ENCODE measurements at regions of chr5 and their contacts with region 1.

Region 1: GRCh38 chr5:88680253-88681132 is 202.5 kb downstream of the MEF2C start:
- DNase-seq: peak; percentile 77
- H3K4me3 Mint-ChIP-seq: peak overlapping the region; percentile 43
- H3K27ac Mint-ChIP-seq: no peak overlapping the region
- H3K4me1 Mint-ChIP-seq: peaks cover 15% of the 10 kb centered on the region
- H3K27me3 Mint-ChIP-seq: peaks cover 73% of the 10 kb centered on the region

Region 2: GRCh38 chr5:87780831-87781760 is 899.4 kb before region 1 on chr5:
- CTCF ChIA-PET with region 1: interaction called, 31 read pairs
- intact Hi-C with region 1: loop called (anchors 1 kb)
- DNase-seq: peak; percentile 88
- H3K4me3 Mint-ChIP-seq: no peak overlapping the region
- H3K27ac Mint-ChIP-seq: no peak overlapping the region
- H3K4me1 Mint-ChIP-seq: peaks cover 3% of the 10 kb centered on the region
- H3K27me3 Mint-ChIP-seq: peaks cover 24% of the 10 kb centered on the region

Region 3: GRCh38 chr5:88268385-88269184 is 411.9 kb before region 1 on chr5 and contains the start of gene TMEM161B:
- CTCF ChIA-PET with region 1: no interaction called
- intact Hi-C with region 1: loop called (anchors 2 kb)
- DNase-seq: peak; percentile 94
- H3K4me3 Mint-ChIP-seq: peak within 1 kb of the TSS; percentile 93
- H3K27ac Mint-ChIP-seq: peak within 1 kb of the TSS; percentile 96
- H3K4me1 Mint-ChIP-seq: peaks cover 42% of the 10 kb centered on the region
- H3K27me3 Mint-ChIP-seq: no peaks in the 10 kb centered on the region
- total RNA-seq, gene TMEM161B: 18.0 to 18.1 TPM

Region 4: DNA sequence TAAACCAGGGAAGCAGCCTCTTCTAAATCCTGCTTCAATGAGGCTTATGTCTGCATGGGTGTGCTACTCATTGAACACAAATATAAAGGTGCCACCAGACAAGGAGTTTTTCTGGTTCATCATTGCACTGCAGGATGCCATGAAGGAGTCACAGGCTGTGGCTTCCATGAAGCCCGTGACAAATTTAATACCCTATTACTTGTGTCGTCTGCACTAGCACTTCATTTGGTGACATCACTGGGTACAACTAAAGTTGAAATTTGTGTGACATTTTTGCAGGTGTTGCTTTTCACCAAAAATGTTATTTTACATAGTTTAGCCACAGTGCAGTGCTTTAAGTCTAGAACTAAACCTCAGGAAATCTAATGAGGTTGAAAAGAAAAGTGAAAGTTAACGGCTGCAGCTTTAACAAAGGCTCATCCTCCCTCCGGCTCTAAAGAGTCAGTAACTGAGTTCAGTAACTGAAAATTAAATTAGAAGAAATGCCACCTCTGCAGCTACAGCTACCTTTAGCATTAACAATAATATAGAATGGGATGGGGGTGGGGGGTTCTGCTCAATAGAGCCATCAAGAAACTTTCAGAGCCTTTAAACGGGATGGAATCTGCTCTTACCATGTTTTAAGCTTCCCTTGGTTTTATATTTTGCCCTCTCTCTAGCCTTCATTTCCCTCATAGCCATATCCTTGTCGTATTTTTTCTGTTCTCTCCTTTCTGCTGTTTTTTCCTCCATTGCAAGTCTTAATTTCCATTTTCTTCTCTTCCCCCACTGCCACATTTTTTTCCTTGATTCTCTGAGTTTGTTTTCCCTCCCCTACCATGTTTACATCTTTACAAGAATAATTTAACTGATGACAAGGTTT is 178.1 kb before region 1 on chr5:
- CTCF ChIA-PET with region 1: no interaction called
- intact Hi-C with region 1: loop called (anchors 2 kb)
- DNase-seq: peak; percentile 20
- H3K4me3 Mint-ChIP-seq: peak overlapping the region; percentile 78
- H3K27ac Mint-ChIP-seq: peak overlapping the region; percentile 77
- H3K4me1 Mint-ChIP-seq: peaks cover 3% of the 10 kb centered on the region
- H3K27me3 Mint-ChIP-seq: no peaks in the 10 kb centered on the region

Region 5: GRCh38 chr5:88660947-88661805 is 19.3 kb before region 1 on chr5:
- CTCF ChIA-PET with region 1: interaction called, 6 read pairs
- intact Hi-C with region 1: loop called (anchors 1 kb)
- DNase-seq: peak; percentile 51
- H3K4me3 Mint-ChIP-seq: peak overlapping the region; percentile 56
- H3K27ac Mint-ChIP-seq: no peak overlapping the region
- H3K4me1 Mint-ChIP-seq: peaks cover 13% of the 10 kb centered on the region
- H3K27me3 Mint-ChIP-seq: peaks cover 64% of the 10 kb centered on the region

Region 6: DNA sequence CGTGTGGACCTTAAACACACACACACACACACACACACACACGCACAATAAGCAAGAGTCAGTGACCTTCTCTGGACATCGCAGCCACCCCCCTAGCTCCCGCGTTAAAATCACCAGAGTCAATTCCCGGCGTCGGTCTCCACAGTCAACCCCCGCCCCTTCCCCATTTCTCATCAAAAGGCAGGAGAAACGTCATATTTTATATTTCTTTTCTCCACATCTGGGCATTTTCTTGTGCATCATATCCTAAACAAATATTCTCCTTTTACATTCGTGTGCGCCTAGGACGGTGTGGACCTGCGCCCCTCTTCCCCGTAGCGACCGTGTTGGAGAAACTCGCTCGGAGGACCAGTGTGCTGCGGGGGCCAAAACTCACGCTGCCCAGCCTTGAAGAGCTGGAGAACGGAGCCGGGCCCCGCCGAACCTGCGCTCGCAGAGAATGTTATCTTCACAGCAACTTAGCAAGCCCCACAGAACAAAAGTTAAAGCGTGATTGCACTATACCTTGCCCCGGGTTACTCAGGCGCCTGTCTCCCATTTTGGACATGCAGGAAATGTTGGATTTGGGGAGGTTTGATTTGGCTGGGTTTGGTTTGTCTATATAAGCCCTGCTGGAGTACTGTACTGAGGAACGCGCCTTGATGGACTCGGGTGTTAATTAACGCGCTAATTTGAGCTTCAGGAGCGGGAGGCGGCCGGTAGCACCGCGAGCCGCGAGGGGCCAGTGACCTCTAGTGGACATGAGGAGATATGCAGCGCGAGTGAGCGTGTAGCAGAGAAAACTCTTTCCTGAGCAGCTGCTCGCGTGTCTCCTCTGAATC is 10.1 kb after region 1 on chr5:
- CTCF ChIA-PET with region 1: interaction called, 25 read pairs
- intact Hi-C with region 1: loop called (anchors 1 kb)
- DNase-seq: peak; percentile 77
- H3K4me3 Mint-ChIP-seq: peak overlapping the region; percentile 65
- H3K27ac Mint-ChIP-seq: peak overlapping the region; percentile 81
- H3K4me1 Mint-ChIP-seq: peaks cover 28% of the 10 kb centered on the region
- H3K27me3 Mint-ChIP-seq: peaks cover 84% of the 10 kb centered on the region

Region 7: GRCh38 chr5:88778736-88779135 is 98.2 kb after region 1 on chr5:
- CTCF ChIA-PET with region 1: no interaction called
- intact Hi-C with region 1: no loop called
- DNase-seq: no peak
- H3K4me3 Mint-ChIP-seq: no peak overlapping the region
- H3K27ac Mint-ChIP-seq: no peak overlapping the region
- H3K4me1 Mint-ChIP-seq: no peaks in the 10 kb centered on the region
- H3K27me3 Mint-ChIP-seq: peaks cover 21% of the 10 kb centered on the region

Region 8: GRCh38 chr5:88883059-88883835 is 202.8 kb after region 1 on chr5 and contains the start of gene MEF2C:
- CTCF ChIA-PET with region 1: no interaction called
- intact Hi-C with region 1: loop called (anchors 5 kb)
- DNase-seq: peak; percentile 12
- H3K4me3 Mint-ChIP-seq: peak within 1 kb of the TSS; percentile 76
- H3K27ac Mint-ChIP-seq: no peak within 1 kb of the TSS
- H3K4me1 Mint-ChIP-seq: peaks cover 20% of the 10 kb centered on the region
- H3K27me3 Mint-ChIP-seq: peaks cover 57% of the 10 kb centered on the region
- total RNA-seq, gene MEF2C: not detected

Measured in activated naive CD4-positive, alpha-beta T cell treated with anti-CD3 and anti-CD28 coated beads for 36 hours (primary cell).